ENCODE measurements at regions of chr12 and their contacts with region 1.

Region 1: DNA sequence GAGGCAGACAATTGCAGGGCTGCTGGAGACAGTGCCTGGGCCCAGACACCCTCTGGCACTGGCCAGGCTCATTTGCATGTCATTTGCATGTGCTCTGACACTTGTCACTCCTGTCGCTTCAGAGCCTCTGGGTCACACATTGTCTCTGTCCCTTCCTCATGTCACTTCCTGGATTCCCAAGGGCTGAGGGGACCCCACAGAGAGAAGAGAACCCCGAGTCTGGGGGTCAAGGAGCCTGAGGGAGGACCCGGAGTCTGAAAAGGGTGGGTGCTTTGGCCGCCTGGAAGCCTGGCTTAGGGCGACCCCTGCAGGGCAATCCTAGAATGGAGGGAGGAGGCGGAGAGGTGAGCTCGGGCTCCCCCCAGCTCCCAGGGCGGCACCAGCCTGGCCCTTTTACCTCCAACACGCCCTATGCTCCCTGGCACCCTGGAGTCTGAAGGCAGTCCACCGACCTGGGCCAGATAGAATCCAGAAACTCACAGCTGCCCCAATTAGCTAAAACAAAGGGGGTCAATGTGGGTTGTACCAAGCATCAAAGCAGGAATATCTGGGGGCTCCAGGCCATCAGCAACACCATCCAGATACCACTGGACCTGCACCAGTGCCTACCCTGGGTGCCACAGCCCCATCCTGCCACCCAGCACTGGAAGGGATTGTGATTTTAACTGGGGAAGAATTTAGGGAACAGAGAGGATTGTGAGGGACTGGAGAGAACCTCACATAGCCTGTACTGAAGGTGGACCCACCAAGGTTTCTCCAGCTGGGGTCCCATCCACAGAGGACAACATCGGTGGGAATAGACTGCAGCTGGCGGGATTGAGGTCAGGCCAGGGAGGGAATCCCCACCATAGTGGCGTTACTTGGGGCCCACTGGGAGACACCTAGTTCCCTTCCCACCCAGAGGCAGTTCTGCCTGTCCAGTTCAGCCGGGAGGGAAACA is 21.8 kb upstream of the KRT78 start:
- DNase-seq: peak; percentile 80

Region 2: DNA sequence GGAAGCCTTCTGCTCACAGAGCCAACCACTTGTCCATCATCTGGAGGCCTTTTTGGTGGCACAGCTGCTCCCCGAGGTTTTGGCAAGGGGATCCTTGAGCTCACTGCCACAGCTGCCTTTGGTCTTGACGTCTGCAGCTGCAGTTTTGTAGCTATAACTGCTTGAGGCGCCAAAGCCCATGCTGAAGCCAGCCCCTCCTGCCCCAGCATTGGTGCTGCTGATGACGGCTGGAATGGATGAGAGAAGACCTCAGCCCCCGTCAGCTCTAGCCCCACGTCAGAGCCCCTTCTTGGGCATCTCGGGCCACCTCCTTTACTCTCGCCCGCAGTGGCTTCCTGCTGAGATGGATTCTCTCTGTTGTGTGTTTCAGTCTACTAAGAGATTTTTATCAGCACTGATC is 284.7 kb before region 1 on chr12:
- CTCF ChIA-PET with region 1: interaction called, 10 read pairs
- POLR2A ChIA-PET with region 1: interaction called, 3 read pairs
- DNase-seq: no peak

Region 3: GRCh38 chr12:52895061-52895887 is 24.7 kb after region 1 on chr12:
- CTCF ChIA-PET with region 1: no interaction called
- POLR2A ChIA-PET with region 1: no interaction called
- DNase-seq: no peak

Measured in HEK293T (cell line).